ENCODE measurements at regions of chr10 and their contacts with region 1.

Region 1: GRCh38 chr10:104045151-104046089 is 40.3 kb downstream of the COL17A1 start:
- DNase-seq: peak; percentile 43
- H3K4me3 Mint-ChIP-seq: no peak overlapping the region
- H3K27ac Mint-ChIP-seq: no peak overlapping the region
- H3K4me1 Mint-ChIP-seq: peaks cover 5% of the 10 kb centered on the region
- H3K27me3 Mint-ChIP-seq: no peaks in the 10 kb centered on the region

Region 2: GRCh38 chr10:103872137-103872931 is 173.1 kb before region 1 on chr10:
- CTCF ChIA-PET with region 1: no interaction called
- POLR2A ChIA-PET with region 1: no interaction called
- intact Hi-C with region 1: no loop called
- DNase-seq: no peak
- H3K4me3 Mint-ChIP-seq: no peak overlapping the region
- H3K27ac Mint-ChIP-seq: no peak overlapping the region
- H3K4me1 Mint-ChIP-seq: no peaks in the 10 kb centered on the region
- H3K27me3 Mint-ChIP-seq: no peaks in the 10 kb centered on the region

Region 3: GRCh38 chr10:104209575-104210198 is 164.3 kb after region 1 on chr10:
- CTCF ChIA-PET with region 1: interaction called, 3 read pairs
- POLR2A ChIA-PET with region 1: no interaction called
- intact Hi-C with region 1: loop called (anchors 10 kb)
- DNase-seq: peak; percentile 44
- H3K4me3 Mint-ChIP-seq: no peak overlapping the region
- H3K27ac Mint-ChIP-seq: no peak overlapping the region
- H3K4me1 Mint-ChIP-seq: no peaks in the 10 kb centered on the region
- H3K27me3 Mint-ChIP-seq: peaks cover 12% of the 10 kb centered on the region